ENCODE measurements at regions of chr20 and their contacts with region 1.

Region 1: DNA sequence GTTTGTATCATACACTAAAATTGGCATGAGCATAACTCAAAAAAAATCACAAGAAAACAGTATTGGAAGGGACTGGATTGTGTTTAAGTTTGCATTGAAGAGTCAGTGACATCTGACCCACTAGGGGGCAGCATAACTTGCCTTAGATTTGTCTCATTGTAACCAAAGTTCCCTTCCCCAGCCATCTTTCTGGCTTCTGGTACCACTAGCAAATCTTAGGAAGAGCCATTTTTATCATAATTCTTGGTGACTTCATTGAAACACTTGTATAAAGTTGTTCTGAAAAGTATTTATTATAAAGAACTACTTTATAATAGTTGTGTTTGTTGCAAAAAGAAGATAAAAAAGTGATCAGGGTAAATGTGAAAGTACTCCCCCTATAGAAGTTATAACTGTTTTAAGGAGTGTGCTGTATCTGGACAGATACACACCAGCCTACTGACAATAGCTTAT is 7.7 kb downstream of the CSTF1 start:
- DNase-seq: peak in 8 of 9 donors; percentile 43 to 78 (median 72)
- ATAC-seq: peak; percentile 91
- H3K4me3 ChIP-seq: no peak overlapping the region
- H3K4me3 Mint-ChIP-seq: peak overlapping the region in 3 of 10 donors; percentile 28 to 35 (median 32)
- H3K27ac ChIP-seq: peak overlapping the region; percentile 31
- H3K27ac Mint-ChIP-seq: peak overlapping the region in 8 of 9 donors; percentile 32 to 78 (median 66)
- H3K4me1 ChIP-seq: peaks cover 5 to 6% of the 10 kb centered on the region in 2 donors
- H3K4me1 Mint-ChIP-seq: peaks cover 10 to 42% (median 27%) of the 10 kb centered on the region in 7 donors
- H3K27me3 ChIP-seq: no peaks in the 10 kb centered on the region
- H3K27me3 Mint-ChIP-seq: no peaks in the 10 kb centered on the region

Region 2: DNA sequence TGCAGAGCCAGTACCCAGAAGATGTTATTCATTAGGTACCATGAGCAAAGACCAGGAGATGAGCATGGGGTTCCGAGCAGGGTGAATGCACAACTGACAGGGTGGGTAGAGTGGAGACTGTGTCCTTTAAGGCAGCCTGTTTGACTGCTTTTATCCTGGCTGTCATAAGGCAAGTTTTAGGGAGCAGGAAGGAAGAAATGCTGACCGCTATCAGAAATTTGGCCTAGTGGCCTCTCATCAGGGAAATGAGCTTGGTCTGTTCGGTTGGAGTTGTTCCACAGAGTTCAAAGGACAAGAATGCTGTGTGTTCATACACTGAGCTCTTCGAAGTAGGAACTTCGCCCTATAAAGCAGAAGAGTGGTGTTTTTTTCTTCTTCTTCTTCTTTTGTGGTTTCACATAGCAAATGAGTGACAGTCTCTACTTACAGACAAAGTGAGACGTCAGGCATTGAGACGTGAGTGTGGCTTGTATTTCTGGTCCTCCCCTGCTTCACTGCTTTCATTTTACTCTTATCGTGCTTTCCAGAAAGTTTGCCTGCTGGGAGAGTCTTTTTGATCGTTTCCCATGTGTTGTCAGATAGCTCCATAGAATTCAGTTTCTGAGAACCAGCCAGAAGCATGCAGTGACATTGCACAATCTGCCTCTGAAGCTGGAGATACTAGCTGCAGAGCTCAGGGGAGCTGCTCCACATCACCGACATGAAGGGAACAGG is 11.8 kb after region 1 on chr20 and contains the start of gene CASS4:
- CTCF ChIA-PET with region 1: interaction called, 5 read pairs
- POLR2A ChIA-PET with region 1: interaction called, 22 read pairs
- intact Hi-C with region 1: loop called (anchors 1 kb)
- DNase-seq: peak in 7 of 9 donors; percentile 65 to 83 (median 73)
- ATAC-seq: peak; percentile 91
- H3K4me3 ChIP-seq: peak within 1 kb of the TSS; percentile 71
- H3K4me3 Mint-ChIP-seq: peak within 1 kb of the TSS; percentile 88 to 97 (median 92)
- H3K27ac ChIP-seq: peak within 1 kb of the TSS; percentile 78
- H3K27ac Mint-ChIP-seq: peak within 1 kb of the TSS; percentile 89 to 99 (median 97)
- H3K4me1 ChIP-seq: peaks cover 26 to 32% of the 10 kb centered on the region in 2 donors
- H3K4me1 Mint-ChIP-seq: peaks cover 32 to 64% (median 61%) of the 10 kb centered on the region in 7 donors
- H3K27me3 ChIP-seq: no peaks in the 10 kb centered on the region
- H3K27me3 Mint-ChIP-seq: no peaks in the 10 kb centered on the region
- total RNA-seq, gene CASS4: 8.0 to 16.9 (median 14.3) TPM

Region 3: DNA sequence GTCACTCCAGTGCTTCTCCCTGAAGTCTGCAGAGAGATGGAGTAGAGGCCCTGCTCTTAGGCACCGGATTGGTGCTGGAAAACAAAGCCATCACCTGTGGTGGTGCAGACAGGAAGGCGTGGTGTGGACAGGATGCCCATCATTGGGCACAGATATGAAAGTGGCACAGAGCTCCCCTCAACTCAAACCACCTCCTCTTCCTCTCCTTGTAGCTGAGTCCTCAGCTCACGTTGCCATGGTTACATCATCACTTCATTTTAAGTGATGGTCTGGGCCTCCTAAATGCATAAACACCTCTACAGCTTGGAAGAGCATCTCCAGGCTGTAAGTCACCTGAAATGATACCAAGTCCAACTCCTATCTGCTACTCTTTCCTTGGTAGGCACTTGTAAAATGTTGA is 60.3 kb after region 1 on chr20:
- CTCF ChIA-PET with region 1: no interaction called
- POLR2A ChIA-PET with region 1: no interaction called
- intact Hi-C with region 1: loop called in 1 of 2 experiments (anchors 2 kb)
- DNase-seq: peak in 6 of 9 donors; percentile 26 to 67 (median 56)
- ATAC-seq: peak; percentile 94
- H3K4me3 ChIP-seq: no peak overlapping the region
- H3K4me3 Mint-ChIP-seq: peak overlapping the region in 2 of 10 donors; percentile 38 to 44
- H3K27ac ChIP-seq: peak overlapping the region; percentile 62
- H3K27ac Mint-ChIP-seq: peak overlapping the region; percentile 34 to 92 (median 85)
- H3K4me1 ChIP-seq: peaks cover 9 to 38% of the 10 kb centered on the region in 2 donors
- H3K4me1 Mint-ChIP-seq: peaks cover 19 to 47% (median 33%) of the 10 kb centered on the region in 7 donors
- H3K27me3 ChIP-seq: no peaks in the 10 kb centered on the region
- H3K27me3 Mint-ChIP-seq: no peaks in the 10 kb centered on the region

Region 4: GRCh38 chr20:56504373-56505005 is 104.4 kb after region 1 on chr20:
- CTCF ChIA-PET with region 1: interaction called, 3 read pairs
- POLR2A ChIA-PET with region 1: no interaction called
- intact Hi-C with region 1: loop called in 1 of 2 experiments (anchors 1 kb)
- DNase-seq: peak in 6 of 9 donors; percentile 8 to 49 (median 32)
- ATAC-seq: peak; percentile 83
- H3K4me3 ChIP-seq: no peak overlapping the region
- H3K4me3 Mint-ChIP-seq: peak overlapping the region in 5 of 10 donors; percentile 1 to 33 (median 21)
- H3K27ac ChIP-seq: no peak overlapping the region
- H3K27ac Mint-ChIP-seq: peak overlapping the region; percentile 6 to 82 (median 55)
- H3K4me1 ChIP-seq: peaks cover 0 to 4% of the 10 kb centered on the region in 2 donors
- H3K4me1 Mint-ChIP-seq: peaks cover 4 to 67% (median 28%) of the 10 kb centered on the region in 7 donors
- H3K27me3 ChIP-seq: no peaks in the 10 kb centered on the region
- H3K27me3 Mint-ChIP-seq: no peaks in the 10 kb centered on the region

Region 5: DNA sequence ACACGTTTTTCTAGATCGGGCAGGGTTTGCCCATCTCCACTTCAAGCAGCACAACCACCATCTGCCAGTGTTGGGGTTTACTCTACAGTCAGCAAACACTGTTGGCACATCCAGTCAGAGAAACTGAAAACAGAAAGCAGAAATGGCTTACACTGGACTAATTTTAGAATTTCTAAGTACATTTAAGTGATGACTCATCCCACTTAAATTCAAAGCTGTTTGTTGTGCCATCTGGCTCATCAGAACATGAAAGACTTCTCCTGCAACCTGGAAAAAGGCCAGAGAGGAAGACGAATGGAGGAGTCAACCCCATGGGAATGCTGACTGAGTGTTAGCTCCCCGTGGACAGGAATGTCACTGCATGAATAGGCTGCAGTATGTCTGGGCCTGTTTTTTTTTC is 154.8 kb after region 1 on chr20:
- CTCF ChIA-PET with region 1: no interaction called
- POLR2A ChIA-PET with region 1: no interaction called
- intact Hi-C with region 1: loop called in 1 of 2 experiments (anchors 1 kb)
- DNase-seq: no peak
- ATAC-seq: peak; percentile 58
- H3K4me3 ChIP-seq: no peak overlapping the region
- H3K4me3 Mint-ChIP-seq: peak overlapping the region in 1 of 10 donors; percentile 37
- H3K27ac ChIP-seq: no peak overlapping the region
- H3K27ac Mint-ChIP-seq: no peak overlapping the region
- H3K4me1 ChIP-seq: no peaks in the 10 kb centered on the region
- H3K4me1 Mint-ChIP-seq: peaks cover 0 to 8% (median 0%) of the 10 kb centered on the region in 7 donors
- H3K27me3 ChIP-seq: no peaks in the 10 kb centered on the region
- H3K27me3 Mint-ChIP-seq: peaks cover 0 to 2% (median 0%) of the 10 kb centered on the region in 5 donors

Measured in naive thymus-derived CD4-positive, alpha-beta T cell (primary cell).